Esophagus muscularis mucosa (tissue), 4 donors: ENCODE measurements at regions of chr2 and their contacts with region 1.

Region 1: GRCh38 chr2:73385595-73386341 is at the start of gene ALMS1:
- DNase-seq: peak; percentile 97
- H3K4me3 ChIP-seq: peak within 1 kb of the TSS; percentile 66 to 85 (median 75)
- H3K27ac ChIP-seq: peak within 1 kb of the TSS; percentile 84 to 94 (median 90)
- H3K4me1 ChIP-seq: peaks cover 10 to 23% (median 20%) of the 10 kb centered on the region in 4 donors
- H3K27me3 ChIP-seq: no peaks in the 10 kb centered on the region
- CTCF ChIP-seq: peak; percentile 35 to 42 (median 37)
- EP300 ChIP-seq: no peak
- POLR2A ChIP-seq: no peak
- total RNA-seq, gene ALMS1: 31.3 to 36.1 (median 32.4) TPM

Region 2: DNA sequence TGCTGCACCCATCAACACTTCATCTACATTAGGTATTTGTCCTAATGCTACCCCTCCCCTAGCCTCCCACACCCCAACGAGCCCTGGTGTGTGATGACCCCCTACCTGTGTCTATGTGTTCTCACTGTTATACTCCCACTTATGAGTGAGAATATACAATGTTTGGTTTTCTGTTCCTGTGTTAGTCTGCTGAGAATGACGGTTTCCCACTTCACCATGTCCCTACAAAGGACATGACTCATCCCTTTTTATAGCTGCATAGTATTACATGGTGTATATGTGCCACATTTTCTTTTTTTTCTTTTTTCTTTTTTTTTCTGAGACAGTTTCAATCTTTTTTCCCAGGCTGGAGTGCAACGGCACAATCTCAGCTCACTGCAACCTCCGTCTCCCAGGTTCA is 954.0 kb before region 1 on chr2:
- intact Hi-C with region 1: no loop called
- DNase-seq: no peak
- H3K4me3 ChIP-seq: no peak overlapping the region
- H3K27ac ChIP-seq: no peak overlapping the region
- H3K4me1 ChIP-seq: no peaks in the 10 kb centered on the region
- H3K27me3 ChIP-seq: no peaks in the 10 kb centered on the region
- CTCF ChIP-seq: no peak
- EP300 ChIP-seq: no peak
- POLR2A ChIP-seq: no peak

Region 3: GRCh38 chr2:73212448-73213176 is 173.2 kb before region 1 on chr2:
- intact Hi-C with region 1: loop called (anchors 10 kb)
- DNase-seq: no peak
- H3K4me3 ChIP-seq: no peak overlapping the region
- H3K27ac ChIP-seq: peak overlapping the region in 2 of 4 donors; percentile 20 to 28
- H3K4me1 ChIP-seq: peaks cover 4 to 35% (median 27%) of the 10 kb centered on the region in 4 donors
- H3K27me3 ChIP-seq: no peaks in the 10 kb centered on the region
- CTCF ChIP-seq: peak; percentile 77 to 98 (median 82)
- EP300 ChIP-seq: no peak
- POLR2A ChIP-seq: no peak

Region 4: DNA sequence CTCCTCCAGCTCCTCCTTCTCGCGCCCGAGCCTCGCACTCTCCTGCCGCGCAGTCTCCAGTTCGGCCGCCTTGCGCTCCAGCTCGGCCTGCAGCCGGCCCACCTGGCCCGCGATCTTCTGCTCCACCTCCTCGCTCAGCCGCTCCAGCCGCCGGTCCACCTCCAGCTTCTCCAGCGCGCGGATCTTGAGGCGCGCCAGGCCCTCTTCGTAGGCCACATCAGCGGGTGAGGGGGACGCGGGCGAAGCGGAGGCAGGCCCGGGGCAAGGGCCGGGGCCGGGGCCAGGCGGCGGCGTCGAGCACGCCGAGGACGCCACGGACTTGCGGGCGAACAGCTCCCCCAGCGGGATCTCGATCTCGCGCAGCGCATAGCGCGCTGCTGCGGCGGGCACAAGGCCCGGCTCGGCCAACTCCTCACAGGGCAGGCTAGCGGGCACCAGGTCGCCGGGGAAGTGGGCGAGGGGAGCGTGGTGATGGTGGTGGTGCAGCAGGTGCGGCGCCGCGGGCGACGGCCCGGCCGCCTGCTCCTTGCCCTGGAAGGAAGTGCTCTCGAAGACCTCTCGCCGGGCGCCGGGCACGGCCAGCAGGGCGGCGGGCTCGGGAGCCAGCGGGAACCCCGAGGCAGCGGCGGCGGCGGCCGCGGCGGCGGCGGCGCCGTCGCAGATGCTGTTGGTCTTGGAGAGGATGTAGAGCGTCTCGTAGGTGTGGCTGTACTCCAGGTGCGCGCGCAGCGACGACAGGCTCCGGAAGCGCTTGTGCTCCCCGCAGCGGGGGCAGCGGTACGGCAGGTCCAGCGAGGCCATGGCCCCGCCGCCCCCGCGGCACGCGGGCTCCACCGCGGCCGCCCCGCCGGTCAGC is 116.7 kb before region 1 on chr2:
- intact Hi-C with region 1: loop called (anchors 10 kb)
- DNase-seq: no peak
- H3K4me3 ChIP-seq: peak overlapping the region; percentile 16 to 46 (median 30)
- H3K27ac ChIP-seq: no peak overlapping the region
- H3K4me1 ChIP-seq: peaks cover 7 to 14% (median 13%) of the 10 kb centered on the region in 4 donors
- H3K27me3 ChIP-seq: peaks cover 4 to 75% (median 20%) of the 10 kb centered on the region in 4 donors
- CTCF ChIP-seq: no peak
- EP300 ChIP-seq: no peak
- POLR2A ChIP-seq: no peak

Region 5: GRCh38 chr2:73359915-73360697 is 25.7 kb before region 1 on chr2:
- intact Hi-C with region 1: no loop called
- DNase-seq: no peak
- H3K4me3 ChIP-seq: no peak overlapping the region
- H3K27ac ChIP-seq: no peak overlapping the region
- H3K4me1 ChIP-seq: no peaks in the 10 kb centered on the region
- H3K27me3 ChIP-seq: no peaks in the 10 kb centered on the region
- CTCF ChIP-seq: peak in 1 of 3 experiments; percentile 15
- EP300 ChIP-seq: no peak
- POLR2A ChIP-seq: no peak

Region 6: GRCh38 chr2:73431037-73431436 is 45.3 kb after region 1 on chr2:
- intact Hi-C with region 1: no loop called
- DNase-seq: no peak
- H3K4me3 ChIP-seq: no peak overlapping the region
- H3K27ac ChIP-seq: no peak overlapping the region
- H3K4me1 ChIP-seq: no peaks in the 10 kb centered on the region
- H3K27me3 ChIP-seq: no peaks in the 10 kb centered on the region
- CTCF ChIP-seq: no peak
- EP300 ChIP-seq: no peak
- POLR2A ChIP-seq: no peak

Region 7: DNA sequence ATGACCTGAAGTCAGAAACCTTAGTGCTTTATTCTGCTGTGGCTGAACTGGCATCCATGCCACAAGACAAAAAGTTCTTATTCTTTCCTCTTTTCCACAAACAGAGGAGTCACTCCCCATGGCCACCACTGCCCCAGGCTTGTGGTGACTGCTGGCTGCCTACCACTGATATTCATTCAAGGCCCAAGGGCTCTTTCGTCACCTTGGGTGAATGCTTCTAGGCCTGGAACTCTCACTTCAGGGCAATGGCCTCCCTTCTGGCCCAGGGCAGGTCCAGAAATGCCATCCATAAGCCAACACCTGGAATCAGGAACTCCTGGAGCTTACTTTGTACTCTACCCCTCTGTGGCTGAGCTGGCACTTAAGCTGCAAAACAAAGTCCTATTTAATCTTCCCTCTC is 146.6 kb after region 1 on chr2:
- intact Hi-C with region 1: no loop called
- DNase-seq: no peak
- H3K4me3 ChIP-seq: no peak overlapping the region
- H3K27ac ChIP-seq: no peak overlapping the region
- H3K4me1 ChIP-seq: no peaks in the 10 kb centered on the region
- H3K27me3 ChIP-seq: no peaks in the 10 kb centered on the region
- CTCF ChIP-seq: no peak
- EP300 ChIP-seq: no peak
- POLR2A ChIP-seq: no peak